WTC11 (cell line): ENCODE measurements at regions of chr15 and their contacts with region 1.

Region 1: DNA sequence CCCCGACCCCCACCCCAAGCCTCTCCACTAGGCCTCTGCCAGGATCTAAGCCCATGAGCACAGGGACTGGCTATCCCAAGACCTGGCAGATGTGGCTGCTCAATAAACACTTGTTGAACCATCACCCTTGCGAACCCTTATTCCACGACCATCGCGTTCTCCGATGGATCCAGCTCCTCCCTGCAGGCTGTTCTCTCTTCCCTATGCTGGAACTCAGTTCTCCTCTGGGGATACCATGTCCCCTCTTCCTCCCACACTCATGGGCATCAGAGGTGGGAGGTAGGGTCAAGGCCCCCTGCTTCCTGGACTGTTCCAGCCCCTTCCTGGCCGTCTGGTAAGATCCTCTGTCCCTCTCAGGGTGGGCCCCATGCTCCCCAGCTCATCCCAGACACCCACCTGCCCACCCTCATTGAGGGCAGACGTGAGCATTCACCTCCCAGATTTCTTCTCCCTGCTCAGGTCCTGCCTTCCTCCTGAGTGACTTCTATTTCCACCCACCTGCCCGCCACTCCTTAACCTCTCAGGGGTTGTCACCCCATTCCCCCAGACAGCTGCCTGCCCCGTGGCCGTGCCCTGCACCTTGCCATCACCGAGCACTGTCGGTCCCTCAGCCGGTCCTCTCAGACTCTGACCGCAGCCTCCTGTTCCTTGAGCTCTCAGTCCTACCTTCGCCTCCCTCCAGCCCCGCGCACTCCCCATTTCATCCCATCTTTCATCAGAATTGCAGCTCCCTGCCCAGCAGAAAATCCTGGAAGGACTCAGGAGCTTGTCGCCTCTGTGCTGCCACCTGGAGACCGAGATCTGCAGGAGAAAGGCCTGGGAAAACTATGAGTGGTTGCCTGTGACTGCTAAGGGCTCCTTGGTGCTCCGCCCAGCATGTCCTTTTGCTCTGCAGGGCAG is 42.0 kb downstream of the PML start:
- DNase-seq: peak; percentile 86
- ATAC-seq: peak; percentile 86
- H3K4me3 Mint-ChIP-seq: no peak overlapping the region
- H3K27ac Mint-ChIP-seq: peak overlapping the region; percentile 31
- H3K4me1 Mint-ChIP-seq: peaks cover 39% of the 10 kb centered on the region
- H3K27me3 Mint-ChIP-seq: no peaks in the 10 kb centered on the region
- CTCF ChIP-seq: peak; percentile 29; the same call in 1 of the 2 replicates

Region 2: DNA sequence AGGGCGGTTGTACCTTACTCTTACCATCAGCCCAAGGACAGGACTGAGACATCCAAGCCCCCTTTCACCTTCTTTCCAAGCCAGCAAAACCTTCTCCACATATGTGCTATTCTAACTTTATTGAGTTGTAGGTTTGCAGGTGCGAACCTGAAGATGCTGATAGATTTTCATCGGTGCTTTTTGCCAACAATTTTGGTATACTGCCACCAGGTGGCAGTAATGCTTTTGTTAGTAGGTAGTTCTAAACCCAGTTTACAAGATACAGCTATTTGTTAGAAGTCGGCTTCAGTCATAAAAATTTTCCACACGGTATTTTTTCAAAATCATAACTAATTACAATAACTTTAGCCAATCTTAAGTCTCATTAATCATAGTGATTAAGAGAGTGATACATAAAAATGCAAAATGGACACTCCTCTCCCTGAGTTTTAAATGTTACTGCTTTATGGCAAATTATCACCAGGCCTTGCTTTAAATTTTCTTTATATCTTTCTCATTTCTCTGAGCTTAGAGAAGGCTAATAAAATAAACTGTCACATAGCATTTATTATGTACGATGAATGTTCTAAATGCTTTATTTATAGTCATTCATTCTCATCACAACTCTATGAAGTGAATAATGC is 162.5 kb before region 1 on chr15:
- CTCF ChIA-PET with region 1: interaction called, 12 read pairs
- POLR2A ChIA-PET with region 1: no interaction called
- DNase-seq: no peak
- ATAC-seq: peak; percentile 38; the same call in 1 of the 2 replicates
- H3K4me3 Mint-ChIP-seq: no peak overlapping the region
- H3K27ac Mint-ChIP-seq: no peak overlapping the region
- H3K4me1 Mint-ChIP-seq: peaks cover 7% of the 10 kb centered on the region
- H3K27me3 Mint-ChIP-seq: no peaks in the 10 kb centered on the region; the same call in 1 of the 2 replicates
- CTCF ChIP-seq: 0 out of 2 replicates have a peak, but pooled peaks have one; percentile 39

Region 3: GRCh38 chr15:73908030-73908821 is 128.3 kb before region 1 on chr15:
- CTCF ChIA-PET with region 1: no interaction called
- POLR2A ChIA-PET with region 1: no interaction called
- DNase-seq: peak; percentile 95
- ATAC-seq: peak; percentile 99
- H3K4me3 Mint-ChIP-seq: no peak overlapping the region
- H3K27ac Mint-ChIP-seq: no peak overlapping the region
- H3K4me1 Mint-ChIP-seq: peaks cover 5% of the 10 kb centered on the region
- H3K27me3 Mint-ChIP-seq: peaks cover 7% of the 10 kb centered on the region
- CTCF ChIP-seq: peak; percentile 86

Region 4: DNA sequence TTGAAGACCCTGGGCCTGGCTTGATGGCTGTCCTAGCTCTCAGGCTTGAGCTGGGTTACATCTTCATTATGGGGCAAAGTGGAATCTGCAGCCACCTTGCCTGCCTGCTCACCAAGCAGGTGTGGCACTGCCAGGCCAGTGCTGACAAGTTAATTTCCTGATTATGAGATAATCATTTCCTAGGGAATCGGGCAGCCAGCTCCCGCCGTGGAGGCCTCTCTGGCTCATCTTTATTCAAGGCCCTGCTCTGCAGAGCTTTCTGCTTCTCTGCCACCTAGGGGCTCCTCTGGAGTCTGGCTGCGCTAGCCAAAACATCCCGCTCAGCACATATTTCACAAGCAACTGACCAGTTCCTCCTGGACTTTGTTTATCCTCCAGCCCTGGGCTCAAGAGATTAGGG is 100.3 kb before region 1 on chr15:
- CTCF ChIA-PET with region 1: interaction called, 11 read pairs
- POLR2A ChIA-PET with region 1: no interaction called
- DNase-seq: no peak
- ATAC-seq: peak; percentile 33; the same call in 1 of the 2 replicates
- H3K4me3 Mint-ChIP-seq: no peak overlapping the region
- H3K27ac Mint-ChIP-seq: no peak overlapping the region
- H3K4me1 Mint-ChIP-seq: peaks cover 14% of the 10 kb centered on the region
- H3K27me3 Mint-ChIP-seq: no peaks in the 10 kb centered on the region
- CTCF ChIP-seq: no peak

Region 5: DNA sequence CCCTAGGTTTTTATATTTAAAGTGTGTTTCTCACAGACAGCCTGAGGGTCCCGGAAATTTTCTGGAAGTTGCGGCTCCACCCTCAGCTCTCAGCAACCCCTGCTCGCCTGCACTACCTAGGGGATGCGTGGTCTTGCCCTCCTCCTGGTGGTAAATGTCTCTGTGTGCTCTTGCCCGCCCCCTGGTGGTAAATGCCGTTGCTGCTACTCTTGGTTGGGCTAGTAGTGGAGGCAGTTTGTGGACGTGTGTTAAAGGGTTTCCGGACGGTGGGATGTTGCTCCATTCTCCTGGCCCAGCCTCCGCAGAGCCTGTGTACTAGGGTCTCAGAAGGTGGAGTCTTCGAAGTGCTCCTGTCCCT is 71.8 kb before region 1 on chr15:
- CTCF ChIA-PET with region 1: interaction called, 24 read pairs
- POLR2A ChIA-PET with region 1: no interaction called
- DNase-seq: peak; percentile 94
- ATAC-seq: peak; percentile 96
- H3K4me3 Mint-ChIP-seq: peak overlapping the region; percentile 50
- H3K27ac Mint-ChIP-seq: no peak overlapping the region
- H3K4me1 Mint-ChIP-seq: peaks cover 27% of the 10 kb centered on the region
- H3K27me3 Mint-ChIP-seq: no peaks in the 10 kb centered on the region
- CTCF ChIP-seq: peak; percentile 91

Region 6: GRCh38 chr15:73991726-73992593 is 44.6 kb before region 1 on chr15 and contains the start of gene STOML1:
- CTCF ChIA-PET with region 1: interaction called, 89 read pairs
- POLR2A ChIA-PET with region 1: interaction called, 3 read pairs
- DNase-seq: peak; percentile 97
- ATAC-seq: peak; percentile 68
- H3K4me3 Mint-ChIP-seq: peak within 1 kb of the TSS; percentile 74
- H3K27ac Mint-ChIP-seq: no peak within 1 kb of the TSS
- H3K4me1 Mint-ChIP-seq: peaks cover 30% of the 10 kb centered on the region
- H3K27me3 Mint-ChIP-seq: peaks cover 13% of the 10 kb centered on the region
- CTCF ChIP-seq: peak; percentile 81
- total RNA-seq, gene STOML1: 5.0 to 5.5 TPM (median 5.4 TPM) in 3 replicates

Region 7: GRCh38 chr15:74053941-74054529 is 17.5 kb after region 1 on chr15:
- CTCF ChIA-PET with region 1: interaction called, 163 read pairs
- POLR2A ChIA-PET with region 1: interaction called, 8 read pairs
- DNase-seq: peak; percentile 82
- ATAC-seq: peak; percentile 97
- H3K4me3 Mint-ChIP-seq: no peak overlapping the region
- H3K27ac Mint-ChIP-seq: no peak overlapping the region
- H3K4me1 Mint-ChIP-seq: peaks cover 17% of the 10 kb centered on the region
- H3K27me3 Mint-ChIP-seq: peaks cover 21% of the 10 kb centered on the region
- CTCF ChIP-seq: peak; percentile 73